ENCODE measurements at regions of chr15 and their contacts with region 1.

Region 1: DNA sequence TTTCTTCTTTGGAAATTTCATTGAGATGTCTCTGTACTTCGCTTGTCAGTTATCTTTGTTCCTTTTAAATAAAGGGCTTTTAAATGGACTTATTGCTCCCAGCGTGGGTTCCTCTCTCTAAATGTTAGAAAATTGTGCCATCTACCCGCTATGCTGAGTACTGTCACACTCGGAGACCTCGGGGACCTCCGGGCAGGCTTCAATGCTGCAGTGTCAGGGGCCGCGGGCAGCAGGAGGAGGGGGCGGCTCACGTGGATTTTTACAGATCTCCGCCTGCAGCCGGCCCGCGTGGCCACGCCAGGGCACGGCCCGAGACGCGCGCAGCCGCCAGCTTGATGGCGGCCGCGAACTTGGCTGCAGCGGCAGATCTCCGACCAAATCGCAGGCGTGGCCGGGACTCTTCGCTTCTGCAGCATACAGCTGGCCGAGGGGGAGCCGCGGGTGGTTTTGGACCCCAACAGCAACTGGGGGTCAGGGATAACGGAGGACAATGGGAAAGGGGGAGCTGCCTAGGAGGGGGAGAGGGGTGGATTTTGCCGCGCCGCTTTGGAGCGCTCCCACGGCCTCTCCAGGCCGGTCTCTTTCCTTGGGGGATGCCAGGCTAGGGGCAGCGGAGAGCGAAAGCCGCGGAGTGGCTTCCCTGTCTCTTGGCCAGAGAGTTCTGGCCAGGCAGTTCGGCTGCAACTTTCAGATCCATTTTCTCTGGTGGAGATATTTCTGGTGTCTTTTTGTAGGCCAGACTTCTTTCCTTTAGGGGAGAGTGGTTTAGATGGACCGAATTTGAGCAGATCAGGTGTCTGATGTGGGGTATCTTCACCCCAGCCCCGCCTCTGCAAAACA is 15.3 kb downstream of the NR2F2 start:
- DNase-seq: no peak
- H3K4me3 Mint-ChIP-seq: no peak overlapping the region
- H3K27ac Mint-ChIP-seq: no peak overlapping the region
- H3K4me1 Mint-ChIP-seq: peaks cover 4% of the 10 kb centered on the region
- H3K27me3 Mint-ChIP-seq: peaks cover 88% of the 10 kb centered on the region

Region 2: DNA sequence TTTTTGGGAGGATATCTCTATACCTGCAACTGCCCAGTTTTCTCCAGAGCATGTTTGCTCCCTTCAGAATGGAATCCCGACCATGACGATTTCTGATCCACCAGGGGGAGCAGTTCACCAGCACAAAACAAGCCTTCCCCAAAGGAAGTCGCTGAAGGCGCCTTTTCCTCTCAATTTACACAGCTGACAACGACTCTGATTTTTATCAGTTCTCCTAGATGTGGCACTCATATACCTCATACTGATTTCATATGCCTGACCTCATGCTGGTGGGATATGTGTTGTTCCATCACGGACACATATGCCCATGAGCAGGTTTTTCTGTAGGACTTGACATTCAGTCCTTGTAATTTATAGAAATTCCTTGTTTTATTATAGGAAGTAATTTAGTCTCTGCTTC is 1086.3 kb before region 1 on chr15:
- CTCF ChIA-PET with region 1: no interaction called
- POLR2A ChIA-PET with region 1: no interaction called
- intact Hi-C with region 1: loop called (anchors 10 kb)
- DNase-seq: peak; percentile 53
- H3K4me3 Mint-ChIP-seq: no peak overlapping the region
- H3K27ac Mint-ChIP-seq: no peak overlapping the region
- H3K4me1 Mint-ChIP-seq: no peaks in the 10 kb centered on the region
- H3K27me3 Mint-ChIP-seq: peaks cover 11% of the 10 kb centered on the region

Measured in activated CD4-positive, alpha-beta memory T cell treated with anti-CD3 and anti-CD28 coated beads for 36 hours (primary cell).